Panc1 (cell line): ENCODE measurements at regions of chr19 and their contacts with region 1.

Region 1: DNA sequence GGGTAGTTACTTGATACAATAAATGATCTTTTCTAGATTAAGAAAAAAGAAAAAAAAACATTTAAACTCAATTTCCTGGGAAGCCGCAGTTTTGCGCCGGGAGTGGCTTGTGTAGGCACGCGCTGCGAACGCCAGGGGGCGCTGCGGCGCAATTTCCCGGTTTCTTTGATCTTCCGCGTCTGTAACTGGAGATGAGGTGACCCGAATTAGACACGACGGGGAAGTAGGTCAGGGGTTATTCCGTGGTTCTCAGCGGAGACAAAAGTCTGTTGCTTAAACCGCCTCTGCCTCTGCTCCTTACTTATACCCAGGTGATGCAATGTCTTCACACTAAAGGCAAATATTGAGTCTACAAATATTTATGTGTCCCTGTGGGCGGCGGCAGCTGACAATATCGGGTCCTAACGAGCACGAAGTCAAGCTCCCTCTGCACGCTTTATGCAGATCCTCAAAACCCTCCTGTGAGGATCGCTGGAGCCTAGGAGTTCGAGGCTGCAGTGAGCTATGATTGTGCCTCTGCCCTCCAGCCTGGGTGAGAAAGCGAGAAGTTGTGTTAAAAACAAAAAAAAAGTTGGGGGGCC is 15.2 kb downstream of the STXBP2 start:
- DNase-seq: peak; percentile 70
- ATAC-seq: peak; percentile 70
- H3K4me3 ChIP-seq: peak overlapping the region; percentile 25 to 58
- H3K27ac ChIP-seq: peak overlapping the region; percentile 39; the same call in 1 of the 2 replicates
- H3K4me1 ChIP-seq: no peaks in the 10 kb centered on the region
- H3K27me3 ChIP-seq: no peaks in the 10 kb centered on the region
- CTCF ChIP-seq: peak; percentile 94

Region 2: DNA sequence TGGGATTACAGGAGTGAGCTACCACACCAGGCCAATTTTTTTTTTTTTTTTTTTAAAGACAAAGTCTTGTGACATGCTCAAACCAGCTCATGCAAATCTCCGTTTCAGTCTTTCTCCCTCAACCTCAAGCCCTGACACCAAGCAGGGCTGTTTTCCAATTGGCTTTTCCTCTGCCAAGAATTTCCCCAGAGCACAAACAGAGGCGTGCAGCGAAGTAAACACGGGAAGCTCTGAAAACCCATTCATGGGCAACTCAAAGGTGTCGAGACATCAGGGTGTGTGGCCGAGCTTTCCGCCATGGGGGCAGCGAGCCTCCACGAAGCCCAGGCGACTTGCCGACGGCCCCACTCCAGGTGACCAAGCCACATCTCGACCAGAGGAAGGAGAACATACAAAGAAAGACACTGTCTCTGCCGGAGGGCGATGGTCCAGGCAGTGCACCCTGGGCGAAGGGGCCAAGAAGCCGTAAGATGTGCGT is 427.9 kb before region 1 on chr19:
- CTCF ChIA-PET with region 1: interaction called, 12 read pairs
- POLR2A ChIA-PET with region 1: no interaction called
- in situ Hi-C with region 1: no loop called
- intact Hi-C with region 1: no loop called
- DNase-seq: no peak
- ATAC-seq: no peak
- H3K4me3 ChIP-seq: no peak overlapping the region
- H3K27ac ChIP-seq: no peak overlapping the region
- H3K4me1 ChIP-seq: no peaks in the 10 kb centered on the region
- H3K27me3 ChIP-seq: no peaks in the 10 kb centered on the region
- CTCF ChIP-seq: no peak

Region 3: DNA sequence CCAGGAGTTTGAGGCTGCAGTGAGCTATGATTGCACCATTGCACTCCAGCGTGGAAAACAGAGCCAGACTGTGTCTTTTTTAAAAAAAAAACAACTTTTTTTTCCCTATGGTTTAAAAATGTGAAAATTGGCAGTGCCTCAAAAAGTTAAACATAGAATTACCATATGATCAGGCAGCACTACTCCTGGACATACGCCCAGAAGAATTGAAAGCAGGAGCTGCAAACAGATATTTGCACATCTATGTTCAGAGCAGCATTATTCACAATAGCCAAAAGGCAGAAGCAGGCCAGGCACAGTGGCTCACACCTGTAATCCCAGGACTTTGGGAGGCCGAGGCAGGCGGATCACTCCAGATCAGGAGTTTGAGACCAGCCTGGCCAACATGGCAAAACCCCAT is 12.9 kb after region 1 on chr19:
- CTCF ChIA-PET with region 1: no interaction called
- POLR2A ChIA-PET with region 1: no interaction called
- in situ Hi-C with region 1: no loop called
- intact Hi-C with region 1: no loop called
- DNase-seq: no peak
- ATAC-seq: no peak
- H3K4me3 ChIP-seq: no peak overlapping the region
- H3K27ac ChIP-seq: no peak overlapping the region
- H3K4me1 ChIP-seq: no peaks in the 10 kb centered on the region
- H3K27me3 ChIP-seq: no peaks in the 10 kb centered on the region
- CTCF ChIP-seq: no peak